ENCODE measurements at regions of chr17 and their contacts with region 1.

Region 1: DNA sequence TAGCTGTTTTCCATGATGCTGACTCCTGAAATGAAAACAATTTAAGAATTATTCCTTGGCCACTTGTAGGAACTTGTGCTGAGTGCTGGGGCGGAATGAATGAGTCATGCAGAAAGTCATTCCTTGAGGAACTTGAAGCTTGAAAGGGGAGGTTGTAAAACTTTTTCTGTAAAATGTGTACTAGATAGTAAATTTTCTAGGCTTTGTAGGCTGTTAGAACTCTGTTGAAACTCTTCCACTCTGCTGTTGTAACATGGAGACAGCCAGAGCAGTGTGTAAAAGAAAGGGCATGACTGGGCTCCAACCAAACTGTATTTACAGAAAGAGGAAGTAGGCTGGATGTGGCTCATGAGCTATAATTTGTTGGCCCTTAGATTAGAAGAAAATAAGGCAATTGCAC is 46.1 kb downstream of the ABCA8 start:
- DNase-seq: peak; percentile 85
- ATAC-seq: peak; percentile 89
- H3K4me3 ChIP-seq: 0 out of 2 replicates have a peak overlapping the region, but pooled peaks have one; percentile 1
- H3K27ac ChIP-seq: peak overlapping the region; percentile 28
- H3K4me1 ChIP-seq: peaks cover 16% of the 10 kb centered on the region
- H3K27me3 ChIP-seq: peaks cover 6% of the 10 kb centered on the region; the same call in 1 of the 2 replicates
- CTCF ChIP-seq: no peak

Region 2: DNA sequence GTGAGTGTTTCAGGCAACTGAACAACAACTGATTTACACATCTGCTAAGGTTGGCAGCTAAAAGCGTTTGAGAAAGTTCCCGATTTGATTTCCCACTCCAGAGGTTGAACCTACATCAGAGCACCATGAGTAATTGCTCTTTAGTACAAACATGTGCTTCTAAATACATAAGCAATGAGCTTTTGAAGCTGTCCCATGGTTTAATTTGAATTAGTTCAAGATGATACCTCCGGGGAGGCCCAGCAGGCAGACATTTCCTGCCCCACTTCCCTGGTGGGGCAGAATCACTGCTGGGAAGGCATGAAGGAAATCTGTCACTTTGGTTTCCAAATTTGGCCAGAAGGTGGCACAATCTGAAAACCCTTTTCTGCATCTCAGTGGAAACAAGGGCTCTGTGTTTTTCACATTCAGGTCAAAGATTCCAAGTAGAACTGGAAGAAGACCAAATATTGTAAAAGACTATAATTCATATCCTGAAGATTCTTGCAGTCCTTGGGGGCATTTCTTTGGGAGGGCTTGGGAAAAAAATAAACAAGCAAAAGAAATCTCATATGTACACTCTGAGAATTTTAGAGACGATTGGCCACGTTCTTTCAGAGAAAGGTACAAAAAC is 131.7 kb before region 1 on chr17:
- CTCF ChIA-PET with region 1: interaction called, 5 read pairs
- POLR2A ChIA-PET with region 1: no interaction called
- intact Hi-C with region 1: loop called (anchors 1 kb)
- DNase-seq: peak; percentile 83
- ATAC-seq: peak; percentile 58
- H3K4me3 ChIP-seq: no peak overlapping the region
- H3K27ac ChIP-seq: no peak overlapping the region
- H3K4me1 ChIP-seq: peaks cover 13% of the 10 kb centered on the region
- H3K27me3 ChIP-seq: peaks cover 5% of the 10 kb centered on the region; the same call in 1 of the 2 replicates
- CTCF ChIP-seq: peak; percentile 93

Region 3: DNA sequence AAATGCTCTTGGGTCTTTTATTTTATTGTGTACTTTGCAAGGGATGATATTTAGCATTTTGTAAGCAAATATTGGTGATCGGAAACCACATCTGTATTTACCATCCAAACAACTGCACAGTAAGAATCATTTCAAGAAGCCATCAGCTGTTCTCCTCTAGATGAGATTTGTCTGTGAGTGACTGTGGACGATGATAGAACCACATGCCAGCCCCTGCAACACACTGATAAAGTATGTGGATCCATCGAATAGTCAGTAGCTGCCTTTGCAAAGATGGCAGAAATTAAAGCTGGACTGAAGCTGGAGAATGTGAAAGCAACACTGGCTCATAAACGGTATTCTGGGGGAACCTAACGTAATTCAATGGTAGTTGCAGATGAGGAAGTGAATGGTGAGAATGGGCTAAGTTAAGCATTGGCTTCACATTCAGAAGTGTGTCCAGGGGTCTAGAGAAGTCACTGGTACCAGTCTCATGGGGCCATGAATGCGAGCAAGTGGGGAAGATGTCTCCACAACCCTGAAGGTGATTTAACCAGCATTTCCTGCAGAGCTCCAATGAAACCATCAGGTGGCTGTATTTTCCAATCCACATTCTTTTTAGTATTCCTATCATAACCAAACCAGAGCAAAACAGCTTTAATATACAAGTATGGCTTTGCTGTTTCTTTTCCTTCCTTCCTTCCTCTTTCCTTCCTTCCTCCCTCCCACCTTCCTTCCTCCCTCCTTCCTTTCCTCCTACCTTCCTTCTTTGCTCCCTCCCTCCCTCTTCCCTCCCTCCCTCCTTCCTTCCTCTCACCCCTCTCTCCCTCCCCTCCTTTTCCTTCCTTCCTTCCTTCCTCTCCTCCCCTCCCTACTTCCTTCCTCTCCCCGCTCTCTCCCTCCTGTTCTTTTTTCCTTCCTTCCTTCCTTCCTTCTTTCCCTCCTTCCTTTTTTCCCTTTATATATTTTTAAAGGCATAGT is 123.2 kb before region 1 on chr17:
- CTCF ChIA-PET with region 1: interaction called, 7 read pairs
- POLR2A ChIA-PET with region 1: no interaction called
- intact Hi-C with region 1: loop called (anchors 2 kb)
- DNase-seq: peak; percentile 22
- ATAC-seq: peak; percentile 46; the same call in 1 of the 2 replicates
- H3K4me3 ChIP-seq: no peak overlapping the region
- H3K27ac ChIP-seq: no peak overlapping the region
- H3K4me1 ChIP-seq: no peaks in the 10 kb centered on the region
- H3K27me3 ChIP-seq: peaks cover 10% of the 10 kb centered on the region; the same call in 1 of the 2 replicates
- CTCF ChIP-seq: 0 out of 2 replicates have a peak, but pooled peaks have one; percentile 29

Region 4: GRCh38 chr17:68794636-68795434 is 114.2 kb before region 1 on chr17:
- CTCF ChIA-PET with region 1: interaction called, 8 read pairs
- POLR2A ChIA-PET with region 1: no interaction called
- intact Hi-C with region 1: loop called (anchors 1 kb)
- DNase-seq: peak; percentile 57
- ATAC-seq: peak; percentile 78
- H3K4me3 ChIP-seq: no peak overlapping the region
- H3K27ac ChIP-seq: no peak overlapping the region
- H3K4me1 ChIP-seq: peaks cover 25% of the 10 kb centered on the region
- H3K27me3 ChIP-seq: no peaks in the 10 kb centered on the region
- CTCF ChIP-seq: peak; percentile 77

Region 5: DNA sequence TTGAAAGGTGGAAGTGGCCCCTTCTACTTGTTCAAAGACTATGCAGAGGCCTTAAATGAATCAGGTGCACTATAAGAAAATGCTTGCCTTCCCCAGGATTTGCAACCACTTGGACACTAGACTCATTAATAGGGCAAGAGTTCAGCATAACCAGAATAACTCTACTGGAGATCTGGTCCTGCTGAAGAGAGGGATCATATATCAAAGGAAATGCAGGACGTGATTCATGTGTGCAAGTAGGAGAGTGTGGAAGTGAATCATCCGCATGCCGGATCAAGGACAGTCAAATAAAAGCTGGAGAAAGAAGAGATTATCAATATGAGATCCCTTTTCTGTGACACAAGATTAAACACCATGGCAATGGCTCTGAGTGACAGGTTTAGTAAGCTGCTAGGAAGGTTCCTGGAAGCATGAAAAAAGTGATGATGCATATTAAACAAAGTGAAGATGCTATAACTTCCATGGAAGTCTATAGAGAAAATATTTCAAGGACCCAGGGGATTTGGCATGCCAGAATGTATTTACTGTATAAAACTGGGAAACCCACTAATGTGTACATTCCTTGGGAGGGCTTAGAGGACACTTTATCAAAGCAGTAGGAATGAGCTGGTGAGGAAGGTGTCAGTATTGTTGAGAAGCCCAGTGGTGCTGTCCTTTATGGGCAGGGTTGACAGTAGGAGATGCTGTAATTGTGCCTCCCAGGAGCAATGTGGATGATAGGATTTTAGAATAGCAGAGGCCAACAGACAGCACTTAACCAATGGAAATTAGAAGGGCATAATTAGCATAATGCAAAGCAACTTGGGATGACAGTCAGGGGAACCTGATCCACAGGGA is 87.0 kb before region 1 on chr17:
- CTCF ChIA-PET with region 1: no interaction called
- POLR2A ChIA-PET with region 1: no interaction called
- intact Hi-C with region 1: loop called (anchors 1 kb)
- DNase-seq: peak; percentile 97
- ATAC-seq: peak; percentile 97
- H3K4me3 ChIP-seq: no peak overlapping the region
- H3K27ac ChIP-seq: peak overlapping the region; percentile 48
- H3K4me1 ChIP-seq: peaks cover 25% of the 10 kb centered on the region
- H3K27me3 ChIP-seq: no peaks in the 10 kb centered on the region
- CTCF ChIP-seq: no peak

Region 6: DNA sequence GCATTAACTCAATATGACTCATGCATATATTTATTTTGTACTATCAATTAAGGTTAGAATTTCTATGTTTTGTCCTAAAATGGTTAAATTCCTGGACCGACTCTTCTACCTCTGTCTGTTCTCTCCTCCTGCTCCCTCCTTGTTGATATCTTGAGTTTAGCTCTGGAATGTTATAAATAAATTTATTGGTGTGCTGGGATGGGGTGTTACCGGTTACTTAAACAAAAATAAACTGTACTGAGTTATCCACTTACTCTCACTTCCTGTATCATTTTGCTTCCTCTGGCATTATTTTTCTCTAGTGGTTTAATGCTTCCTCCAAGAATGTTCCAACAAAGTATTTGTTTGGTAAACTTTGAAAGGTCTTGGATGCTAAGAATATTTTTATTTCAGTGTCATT is 74.0 kb before region 1 on chr17:
- CTCF ChIA-PET with region 1: no interaction called
- POLR2A ChIA-PET with region 1: no interaction called
- intact Hi-C with region 1: loop called (anchors 1 kb)
- DNase-seq: peak; percentile 54
- ATAC-seq: peak; percentile 95
- H3K4me3 ChIP-seq: no peak overlapping the region
- H3K27ac ChIP-seq: peak overlapping the region; percentile 13; the same call in 1 of the 2 replicates
- H3K4me1 ChIP-seq: peaks cover 12% of the 10 kb centered on the region
- H3K27me3 ChIP-seq: no peaks in the 10 kb centered on the region
- CTCF ChIP-seq: no peak

Region 7: DNA sequence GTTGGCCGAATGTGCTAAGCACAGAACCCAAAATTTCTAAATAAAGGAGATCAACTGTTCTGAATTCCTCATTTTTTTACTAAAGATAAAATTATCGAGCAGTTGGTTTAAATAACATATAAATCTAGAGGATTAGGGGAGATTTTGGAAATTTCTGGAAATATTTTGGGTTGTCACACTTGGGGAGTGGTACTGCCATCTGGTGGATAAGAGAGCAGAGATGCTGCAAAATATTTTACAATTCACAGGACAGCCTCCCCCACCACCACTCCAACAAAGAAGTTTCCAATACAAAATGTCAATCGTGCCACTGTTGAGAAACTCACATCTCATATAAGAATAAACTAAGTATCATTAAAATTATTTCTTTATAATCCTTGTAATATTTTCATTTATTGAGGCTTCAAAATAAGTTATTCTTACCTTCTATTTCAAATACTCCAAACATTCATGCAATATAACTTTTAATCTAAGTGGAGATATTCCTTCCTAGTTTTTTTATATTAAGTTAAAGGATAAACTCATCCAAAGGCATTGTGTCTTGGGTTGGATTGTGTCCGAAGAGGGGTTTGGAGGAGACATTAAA is 63.1 kb after region 1 on chr17:
- CTCF ChIA-PET with region 1: no interaction called
- POLR2A ChIA-PET with region 1: no interaction called
- intact Hi-C with region 1: loop called (anchors 1 kb)
- DNase-seq: peak; percentile 62
- ATAC-seq: peak; percentile 65
- H3K4me3 ChIP-seq: no peak overlapping the region
- H3K27ac ChIP-seq: no peak overlapping the region
- H3K4me1 ChIP-seq: no peaks in the 10 kb centered on the region
- H3K27me3 ChIP-seq: peaks cover 8% of the 10 kb centered on the region
- CTCF ChIP-seq: peak; percentile 89

Measured in PC-3 (cell line).